Aorta (tissue), 5 donors: ENCODE measurements at regions of chr1 and their contacts with region 1.

Region 1: GRCh38 chr1:208270651-208271111 is 26.5 kb upstream of the PLXNA2 start:
- DNase-seq: no peak
- ATAC-seq: no peak
- H3K4me3 ChIP-seq: no peak overlapping the region
- H3K27ac ChIP-seq: no peak overlapping the region
- H3K4me1 ChIP-seq: peaks cover 0 to 5% of the 10 kb centered on the region in 2 donors
- H3K27me3 ChIP-seq: no peaks in the 10 kb centered on the region

Region 2: DNA sequence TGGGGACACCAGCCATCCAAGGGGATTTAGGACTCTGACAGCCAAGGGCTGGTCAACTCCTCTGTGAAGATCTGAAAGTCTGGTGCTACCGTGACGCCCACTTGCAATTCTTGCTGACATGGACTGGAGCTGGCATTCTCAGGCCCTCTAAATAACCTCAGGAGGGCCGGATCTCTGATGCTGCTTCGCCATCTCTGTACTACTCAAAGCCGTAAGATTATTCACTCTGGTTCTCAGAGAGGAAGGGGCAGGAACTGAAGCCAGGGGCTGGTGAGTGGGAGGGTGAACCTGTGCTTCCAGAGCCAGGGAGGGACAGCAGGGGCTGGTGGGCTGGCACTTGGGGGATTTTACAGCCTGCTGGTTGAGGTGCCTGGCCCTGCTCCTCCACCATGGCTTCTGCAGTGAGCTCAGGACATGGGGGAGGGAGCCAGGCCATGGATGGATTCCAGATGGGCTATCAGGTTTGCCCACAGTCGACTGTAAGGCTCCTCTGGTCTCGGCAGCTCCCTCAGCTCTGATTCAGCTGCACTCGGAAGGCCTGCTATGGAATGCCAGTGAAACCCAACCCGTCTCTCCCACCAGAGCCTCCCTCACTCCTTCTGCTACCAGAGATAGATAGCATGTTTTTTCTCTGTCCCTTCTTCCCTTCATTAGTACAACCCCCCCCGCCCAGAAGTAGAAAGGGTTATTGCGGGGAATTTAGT is 111.0 kb before region 1 on chr1:
- intact Hi-C with region 1: no loop called
- DNase-seq: peak in 1 of 2 donors; percentile 69
- ATAC-seq: peak; percentile 37
- H3K4me3 ChIP-seq: no peak overlapping the region
- H3K27ac ChIP-seq: no peak overlapping the region
- H3K4me1 ChIP-seq: peaks cover 0 to 4% of the 10 kb centered on the region in 2 donors
- H3K27me3 ChIP-seq: no peaks in the 10 kb centered on the region

Region 3: GRCh38 chr1:208192995-208193394 is 77.7 kb before region 1 on chr1:
- intact Hi-C with region 1: no loop called
- DNase-seq: no peak
- ATAC-seq: no peak
- H3K4me3 ChIP-seq: no peak overlapping the region
- H3K27ac ChIP-seq: no peak overlapping the region
- H3K4me1 ChIP-seq: no peaks in the 10 kb centered on the region
- H3K27me3 ChIP-seq: no peaks in the 10 kb centered on the region

Region 4: GRCh38 chr1:208349694-208350330 is 79.1 kb after region 1 on chr1:
- intact Hi-C with region 1: loop called in 1 of 2 experiments (anchors 10 kb)
- DNase-seq: no peak
- ATAC-seq: no peak
- H3K4me3 ChIP-seq: no peak overlapping the region
- H3K27ac ChIP-seq: no peak overlapping the region
- H3K4me1 ChIP-seq: no peaks in the 10 kb centered on the region
- H3K27me3 ChIP-seq: no peaks in the 10 kb centered on the region